AG04450 (cell line): ENCODE measurements at regions of chr4 and their contacts with region 1.

Region 1: DNA sequence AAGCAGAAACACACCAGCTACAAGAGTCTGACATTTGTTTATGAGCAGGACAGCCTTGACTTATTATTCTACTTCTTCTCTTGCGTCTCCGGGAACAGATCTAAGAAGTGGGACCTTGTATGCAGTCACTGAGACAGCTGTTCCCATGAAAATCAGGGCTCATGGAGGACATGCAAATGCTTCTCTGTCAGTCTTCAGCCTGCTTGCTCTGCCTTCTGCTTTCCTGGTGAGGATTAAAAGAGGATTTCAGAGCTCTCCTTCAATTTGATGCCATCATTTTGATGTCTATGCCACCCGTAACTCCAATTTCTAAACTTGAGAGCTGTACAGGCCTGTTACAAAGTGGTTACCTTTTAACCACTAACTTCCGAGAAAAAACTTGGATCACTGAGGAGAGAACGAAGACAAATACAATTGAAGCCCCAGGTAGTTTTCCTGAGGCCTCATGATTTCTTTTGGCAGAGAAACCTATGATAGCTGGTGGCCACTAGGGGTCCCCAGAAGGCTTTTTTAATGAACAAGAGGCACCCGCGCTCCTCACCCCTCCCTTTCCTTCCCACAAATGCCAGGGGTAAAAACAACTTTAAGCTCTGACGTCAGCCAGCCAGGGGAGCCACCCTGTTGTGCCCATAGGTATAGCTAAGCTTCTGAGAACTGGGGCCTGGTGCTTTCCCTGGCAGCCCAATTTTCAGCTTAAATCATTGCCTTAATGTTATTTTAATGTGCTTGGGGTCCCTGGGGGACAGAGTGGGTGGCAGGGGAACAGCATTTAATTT is 97.0 kb downstream of the DDIT4L start:
- DNase-seq: peak; percentile 56
- H3K4me3 ChIP-seq: no peak overlapping the region
- H3K27ac ChIP-seq: no peak overlapping the region
- H3K27me3 ChIP-seq: peaks cover 4% of the 10 kb centered on the region
- CTCF ChIP-seq: peak; percentile 85

Region 2: GRCh38 chr4:99949034-99949998 is 144.0 kb before region 1 on chr4:
- CTCF ChIA-PET with region 1: interaction called, 16 read pairs
- POLR2A ChIA-PET with region 1: interaction called, 3 read pairs
- DNase-seq: peak; percentile 86
- H3K4me3 ChIP-seq: peak overlapping the region; percentile 90
- H3K27ac ChIP-seq: peak overlapping the region; percentile 91
- H3K27me3 ChIP-seq: no peaks in the 10 kb centered on the region
- CTCF ChIP-seq: peak; percentile 92

Region 3: DNA sequence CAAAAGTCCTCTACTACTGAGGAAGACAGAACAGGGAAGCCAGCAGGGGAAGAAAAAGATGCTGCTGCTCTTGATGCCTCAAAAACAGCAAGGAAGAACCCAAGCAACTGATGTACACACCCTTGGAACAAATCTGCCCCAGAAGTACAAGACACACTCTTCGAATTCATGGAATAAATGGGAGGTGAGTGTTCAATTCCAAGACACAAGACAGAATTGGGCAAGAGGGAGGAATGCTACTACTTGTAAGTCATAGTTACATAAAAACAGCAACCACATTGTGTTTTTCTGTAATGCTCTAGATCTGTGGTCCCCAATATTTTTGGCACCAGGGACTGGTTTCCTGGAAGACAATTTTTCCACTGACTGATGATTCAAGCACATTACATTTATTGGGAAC is 85.2 kb before region 1 on chr4:
- CTCF ChIA-PET with region 1: interaction called, 40 read pairs
- POLR2A ChIA-PET with region 1: no interaction called
- DNase-seq: peak; percentile 21
- H3K4me3 ChIP-seq: no peak overlapping the region
- H3K27ac ChIP-seq: peak overlapping the region; percentile 39
- H3K27me3 ChIP-seq: no peaks in the 10 kb centered on the region
- CTCF ChIP-seq: no peak

Region 4: GRCh38 chr4:100054071-100054470 is 39.2 kb before region 1 on chr4:
- CTCF ChIA-PET with region 1: interaction called, 13 read pairs
- POLR2A ChIA-PET with region 1: no interaction called
- DNase-seq: no peak
- H3K4me3 ChIP-seq: no peak overlapping the region
- H3K27ac ChIP-seq: no peak overlapping the region
- H3K27me3 ChIP-seq: no peaks in the 10 kb centered on the region
- CTCF ChIP-seq: no peak

Region 5: DNA sequence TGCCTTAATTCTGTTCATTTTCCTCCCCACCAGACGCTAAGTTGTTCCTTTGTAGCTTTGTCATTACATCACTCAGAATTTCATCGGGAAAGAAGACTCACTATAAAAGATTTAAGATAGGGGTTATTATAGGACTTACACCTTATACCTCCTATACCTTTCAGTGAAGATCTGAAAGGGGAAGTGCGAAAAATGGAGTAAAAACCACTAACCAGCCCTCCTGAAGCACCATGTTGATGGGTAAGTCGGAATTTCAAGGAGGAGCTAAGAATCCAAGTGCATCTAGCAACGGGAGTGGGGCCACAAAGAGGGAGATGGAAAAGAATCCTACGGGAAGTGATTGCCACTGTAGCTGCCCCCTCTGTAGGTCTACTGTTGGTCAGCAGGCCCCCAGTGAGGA is 24.1 kb before region 1 on chr4:
- CTCF ChIA-PET with region 1: interaction called, 32 read pairs
- POLR2A ChIA-PET with region 1: no interaction called
- DNase-seq: no peak
- H3K4me3 ChIP-seq: no peak overlapping the region
- H3K27ac ChIP-seq: no peak overlapping the region
- H3K27me3 ChIP-seq: peaks cover 3% of the 10 kb centered on the region
- CTCF ChIP-seq: no peak

Region 6: GRCh38 chr4:100082852-100083251 is 10.4 kb before region 1 on chr4:
- CTCF ChIA-PET with region 1: interaction called, 69 read pairs
- POLR2A ChIA-PET with region 1: no interaction called
- DNase-seq: no peak
- H3K4me3 ChIP-seq: no peak overlapping the region
- H3K27ac ChIP-seq: no peak overlapping the region
- H3K27me3 ChIP-seq: no peaks in the 10 kb centered on the region
- CTCF ChIP-seq: no peak

Region 7: DNA sequence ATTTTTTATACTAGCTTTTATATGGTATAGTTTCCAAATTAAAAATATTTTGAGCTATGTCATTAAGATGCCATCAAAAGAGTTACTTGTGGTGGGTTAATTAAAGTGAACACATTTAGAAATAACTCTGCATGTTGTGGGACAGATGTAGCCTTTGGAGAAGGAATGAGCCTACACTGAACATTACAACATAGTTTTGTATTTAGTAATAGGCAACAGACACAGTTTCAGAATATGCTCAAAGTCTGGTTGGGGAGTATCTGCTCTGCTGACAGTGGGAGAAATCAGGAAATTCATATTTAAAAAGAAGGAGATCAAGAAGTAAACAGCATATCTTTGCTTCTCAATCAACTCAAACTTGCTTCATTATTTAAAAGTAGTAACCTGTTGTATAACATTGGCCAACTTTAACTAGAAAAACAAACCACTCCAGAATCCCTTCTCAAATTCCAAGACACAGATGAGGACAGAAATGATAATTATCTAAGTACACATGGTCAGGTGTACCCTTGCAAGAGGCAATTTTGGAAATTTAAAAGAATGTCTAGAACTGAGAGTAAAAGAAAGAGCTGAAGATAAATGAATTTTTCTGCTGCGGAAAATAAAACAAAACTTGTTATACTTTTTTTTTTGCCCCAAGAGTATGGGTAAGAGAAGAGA is 401.0 kb after region 1 on chr4:
- CTCF ChIA-PET with region 1: interaction called, 11 read pairs
- POLR2A ChIA-PET with region 1: no interaction called
- DNase-seq: no peak
- H3K4me3 ChIP-seq: no peak overlapping the region
- H3K27ac ChIP-seq: no peak overlapping the region
- H3K27me3 ChIP-seq: no peaks in the 10 kb centered on the region
- CTCF ChIP-seq: no peak